Dorsolateral prefrontal cortex (tissue), 120 donors: ENCODE measurements at regions of chr15 and their contacts with region 1.

Region 1: GRCh38 chr15:68304589-68305337 is 27.2 kb downstream of the FEM1B start:
- DNase-seq: peak in 1 of 10 donors; percentile 29
- H3K4me3 ChIP-seq: no peak overlapping the region
- H3K27ac ChIP-seq: no peak overlapping the region
- H3K27me3 ChIP-seq: no peaks in the 10 kb centered on the region
- CTCF ChIP-seq: no peak

Region 2: GRCh38 chr15:68252925-68253534 is 51.7 kb before region 1 on chr15:
- intact Hi-C with region 1: loop called (anchors 2 to 5 kb)
- DNase-seq: peak in 2 of 10 donors; percentile 29 to 63
- H3K4me3 ChIP-seq: peak overlapping the region in 44 of 59 donors; percentile 17 to 63 (median 37)
- H3K27ac ChIP-seq: peak overlapping the region in 28 of 59 donors; percentile 1 to 70 (median 27)
- H3K27me3 ChIP-seq: no peaks in the 10 kb centered on the region
- CTCF ChIP-seq: peak; percentile 77 to 98 (median 92)

Region 3: DNA sequence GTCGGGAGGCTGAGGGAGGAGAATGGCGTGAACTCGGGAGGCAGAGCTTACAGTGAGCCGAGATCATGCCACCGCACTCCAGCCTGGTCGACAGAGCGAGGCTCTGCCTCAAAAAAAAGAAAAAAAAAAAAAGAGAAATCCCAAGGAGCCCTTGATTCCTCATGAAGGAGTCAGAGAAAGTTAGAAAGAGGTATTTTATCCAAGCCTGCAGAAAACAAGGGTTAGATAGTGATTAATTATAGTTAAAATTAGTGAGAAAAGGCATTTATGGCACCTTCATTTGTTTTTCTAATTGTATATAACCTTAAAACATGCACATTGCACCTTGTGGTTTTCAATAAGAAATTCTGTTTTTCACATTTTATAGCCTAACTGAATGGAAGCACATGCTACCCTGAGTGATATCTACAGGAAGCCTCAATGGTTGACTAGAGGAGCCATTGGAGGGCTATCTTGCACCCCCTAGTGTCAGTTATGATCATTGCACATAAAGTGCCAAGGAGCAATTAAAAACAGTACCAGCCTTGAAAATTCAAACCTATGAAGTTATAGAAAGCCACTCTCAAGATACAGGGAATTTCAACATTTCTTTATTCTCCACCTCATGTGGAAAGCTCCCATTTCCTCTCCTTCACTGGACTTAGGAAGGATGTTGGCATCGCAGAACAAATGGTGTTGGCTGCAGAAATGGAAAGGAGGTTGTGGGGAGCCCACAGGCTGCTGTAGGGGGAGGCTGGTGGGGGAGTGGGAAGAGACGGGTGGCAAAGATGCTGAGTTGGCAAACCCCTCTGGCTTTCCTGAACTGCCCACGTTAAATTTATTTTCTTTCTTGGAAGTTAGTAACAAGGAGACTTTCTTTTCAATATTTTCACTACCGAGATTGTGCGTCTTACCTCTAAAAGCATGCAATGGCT is 78.7 kb after region 1 on chr15:
- intact Hi-C with region 1: loop called in 1 of 2 experiments (anchors 2 kb)
- DNase-seq: peak in 1 of 10 donors; percentile 5
- H3K4me3 ChIP-seq: no peak overlapping the region
- H3K27ac ChIP-seq: no peak overlapping the region
- H3K27me3 ChIP-seq: peaks cover 0 to 10% (median 0%) of the 10 kb centered on the region in 45 donors
- CTCF ChIP-seq: peak; percentile 42 to 80 (median 63)

Region 4: GRCh38 chr15:68550481-68551295 is 245.9 kb after region 1 on chr15:
- intact Hi-C with region 1: loop called (anchors 2 to 5 kb)
- DNase-seq: peak; percentile 76 to 91 (median 84)
- H3K4me3 ChIP-seq: no peak overlapping the region
- H3K27ac ChIP-seq: no peak overlapping the region
- H3K27me3 ChIP-seq: no peaks in the 10 kb centered on the region
- CTCF ChIP-seq: peak; percentile 82 to 99 (median 97)

Region 5: DNA sequence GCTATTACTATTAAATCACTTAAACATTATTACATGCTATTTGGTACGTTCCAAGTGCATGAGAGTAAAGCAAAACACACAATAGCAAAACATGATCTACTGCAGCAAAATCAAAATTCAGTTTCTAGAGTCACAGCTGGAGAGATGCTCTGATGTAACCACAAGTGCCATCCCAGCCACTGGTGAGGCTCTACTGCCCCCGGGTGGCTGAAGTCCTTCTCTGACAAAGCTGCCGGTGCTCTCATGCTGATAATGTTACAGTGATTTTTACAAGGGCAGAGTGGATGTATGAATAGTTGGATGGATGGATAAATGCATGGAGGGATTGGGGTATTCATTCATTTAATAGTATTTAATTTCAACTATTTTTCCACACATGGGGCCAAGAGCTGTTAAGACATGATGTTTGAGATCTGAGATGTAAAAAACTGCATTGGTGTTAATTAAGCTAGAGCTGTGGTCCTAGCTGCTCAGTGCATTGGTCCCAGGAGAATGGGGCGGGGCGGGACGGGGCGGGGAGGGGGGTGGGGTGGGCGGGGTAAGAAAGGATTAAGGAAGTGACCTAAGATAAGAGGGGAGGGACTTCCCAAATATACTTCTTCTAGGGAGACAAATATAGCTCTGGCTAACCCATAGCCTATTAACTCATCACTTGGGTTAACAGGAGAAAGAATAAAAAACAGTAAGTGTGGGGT is 620.2 kb after region 1 on chr15:
- intact Hi-C with region 1: loop called in 1 of 2 experiments (anchors 2 kb)
- DNase-seq: peak; percentile 75 to 92 (median 84)
- H3K4me3 ChIP-seq: peak overlapping the region in 2 of 59 donors; percentile 10 to 25
- H3K27ac ChIP-seq: peak overlapping the region in 1 of 59 donors; percentile 5
- H3K27me3 ChIP-seq: no peaks in the 10 kb centered on the region
- CTCF ChIP-seq: peak; percentile 46 to 93 (median 84)